Gastrocnemius medialis (tissue), 4 donors: ENCODE measurements at regions of chr9 and their contacts with region 1.

Region 1: GRCh38 chr9:89878687-89879086 is 273.9 kb downstream of the GADD45G start:
- DNase-seq: peak; percentile 93 to 98
- ATAC-seq: peak; percentile 80 to 86
- H3K4me3 ChIP-seq: no peak overlapping the region
- H3K27ac ChIP-seq: peak overlapping the region; percentile 82 to 96 (median 90)
- H3K4me1 ChIP-seq: peaks cover 59 to 66% of the 10 kb centered on the region in 2 donors
- H3K27me3 ChIP-seq: no peaks in the 10 kb centered on the region
- CTCF ChIP-seq: no peak
- POLR2A ChIP-seq: peak; percentile 54 to 70

Region 2: GRCh38 chr9:89483592-89484522 is 394.8 kb before region 1 on chr9:
- in situ Hi-C with region 1: no loop called
- intact Hi-C with region 1: loop called (anchors 10 kb)
- DNase-seq: peak in 1 of 2 donors; percentile 43
- ATAC-seq: peak; percentile 8 to 11
- H3K4me3 ChIP-seq: peak overlapping the region; percentile 5 to 38 (median 33)
- H3K27ac ChIP-seq: peak overlapping the region; percentile 89 to 95 (median 92)
- H3K4me1 ChIP-seq: peaks cover 65 to 71% of the 10 kb centered on the region in 2 donors
- H3K27me3 ChIP-seq: no peaks in the 10 kb centered on the region
- CTCF ChIP-seq: no peak
- POLR2A ChIP-seq: no peak

Region 3: GRCh38 chr9:89623925-89624420 is 254.7 kb before region 1 on chr9:
- in situ Hi-C with region 1: loop called (anchors 25 kb)
- intact Hi-C with region 1: loop called (anchors 5 kb)
- DNase-seq: peak; percentile 41 to 72
- ATAC-seq: peak; percentile 21 to 40
- H3K4me3 ChIP-seq: peak overlapping the region in 3 of 4 donors; percentile 12 to 32 (median 28)
- H3K27ac ChIP-seq: peak overlapping the region; percentile 88 to 94 (median 90)
- H3K4me1 ChIP-seq: peaks cover 55 to 59% of the 10 kb centered on the region in 2 donors
- H3K27me3 ChIP-seq: no peaks in the 10 kb centered on the region
- CTCF ChIP-seq: peak in 2 of 5 experiments; percentile 39 to 49
- POLR2A ChIP-seq: no peak

Region 4: DNA sequence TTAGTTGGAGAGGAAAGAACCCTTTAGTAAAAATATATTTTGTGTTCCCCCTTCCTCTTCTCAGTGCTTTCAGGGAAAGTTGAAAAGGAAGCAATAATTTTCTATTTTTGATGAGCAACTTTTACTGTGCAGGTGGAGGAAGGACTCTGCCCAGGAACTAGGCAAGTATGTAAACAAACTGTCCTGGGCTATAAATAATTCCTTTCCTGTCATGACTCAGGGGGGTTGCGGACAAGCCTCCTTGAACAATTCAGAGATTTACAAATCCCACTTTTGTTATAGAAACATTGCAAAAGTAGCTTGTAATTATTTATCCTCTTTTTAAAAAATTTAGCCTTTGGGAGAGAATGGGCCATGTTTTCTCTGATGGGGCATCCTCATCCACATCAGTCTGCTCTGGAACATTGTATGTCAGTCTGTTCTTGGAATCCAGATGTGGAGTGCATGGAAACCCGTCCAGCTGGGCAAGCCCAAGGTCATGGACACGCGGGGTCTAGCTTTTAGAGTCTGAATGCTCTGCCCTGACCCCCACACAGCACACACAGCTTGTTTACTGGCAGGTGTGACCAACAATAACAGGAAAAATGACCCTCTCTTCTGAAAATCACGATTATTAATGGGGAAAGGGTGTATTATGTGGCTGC is 146.3 kb before region 1 on chr9:
- in situ Hi-C with region 1: no loop called
- intact Hi-C with region 1: loop called (anchors 2 kb)
- DNase-seq: peak in 1 of 2 donors; percentile 39
- ATAC-seq: peak; percentile 79 to 96
- H3K4me3 ChIP-seq: peak overlapping the region in 1 of 4 donors; percentile 15
- H3K27ac ChIP-seq: peak overlapping the region; percentile 61 to 74 (median 68)
- H3K4me1 ChIP-seq: peaks cover 19 to 21% of the 10 kb centered on the region in 2 donors
- H3K27me3 ChIP-seq: no peaks in the 10 kb centered on the region
- CTCF ChIP-seq: no peak
- POLR2A ChIP-seq: no peak

Region 5: DNA sequence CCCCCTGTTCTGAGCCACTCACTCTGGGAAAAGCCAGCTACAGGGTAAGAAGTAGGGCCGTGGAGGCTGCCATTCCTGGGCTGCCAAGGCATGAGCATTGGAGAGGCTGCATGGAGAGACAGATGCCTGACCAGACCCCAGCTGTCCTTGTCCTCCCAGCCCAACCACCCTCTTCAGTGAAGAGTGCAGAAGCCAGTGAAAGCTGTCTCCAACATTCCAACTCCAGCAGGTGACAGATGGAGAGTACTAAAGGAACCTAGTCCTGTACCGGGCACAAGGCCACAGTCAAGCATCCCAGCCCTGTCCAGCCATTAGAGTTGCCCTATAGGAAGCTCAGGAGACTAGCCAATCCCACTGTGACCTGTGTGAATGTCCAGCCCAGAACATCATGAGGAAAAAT is 598.8 kb after region 1 on chr9:
- in situ Hi-C with region 1: no loop called
- intact Hi-C with region 1: no loop called
- DNase-seq: no peak
- ATAC-seq: no peak
- H3K4me3 ChIP-seq: no peak overlapping the region
- H3K27ac ChIP-seq: no peak overlapping the region
- H3K4me1 ChIP-seq: no peaks in the 10 kb centered on the region
- H3K27me3 ChIP-seq: no peaks in the 10 kb centered on the region
- CTCF ChIP-seq: no peak
- POLR2A ChIP-seq: no peak